ENCODE measurements at regions of chr10 and their contacts with region 1.

Region 1: GRCh38 chr10:31707093-31708039 is 221.3 kb downstream of the ARHGAP12 start:
- DNase-seq: peak; percentile 69 to 78
- ATAC-seq: peak; percentile 17 to 49 (median 30)
- H3K4me3 ChIP-seq: peak overlapping the region; percentile 28
- H3K27ac ChIP-seq: peak overlapping the region; percentile 96
- H3K4me1 ChIP-seq: peaks cover 36% of the 10 kb centered on the region
- H3K27me3 ChIP-seq: no peaks in the 10 kb centered on the region
- CTCF ChIP-seq: no peak

Region 2: DNA sequence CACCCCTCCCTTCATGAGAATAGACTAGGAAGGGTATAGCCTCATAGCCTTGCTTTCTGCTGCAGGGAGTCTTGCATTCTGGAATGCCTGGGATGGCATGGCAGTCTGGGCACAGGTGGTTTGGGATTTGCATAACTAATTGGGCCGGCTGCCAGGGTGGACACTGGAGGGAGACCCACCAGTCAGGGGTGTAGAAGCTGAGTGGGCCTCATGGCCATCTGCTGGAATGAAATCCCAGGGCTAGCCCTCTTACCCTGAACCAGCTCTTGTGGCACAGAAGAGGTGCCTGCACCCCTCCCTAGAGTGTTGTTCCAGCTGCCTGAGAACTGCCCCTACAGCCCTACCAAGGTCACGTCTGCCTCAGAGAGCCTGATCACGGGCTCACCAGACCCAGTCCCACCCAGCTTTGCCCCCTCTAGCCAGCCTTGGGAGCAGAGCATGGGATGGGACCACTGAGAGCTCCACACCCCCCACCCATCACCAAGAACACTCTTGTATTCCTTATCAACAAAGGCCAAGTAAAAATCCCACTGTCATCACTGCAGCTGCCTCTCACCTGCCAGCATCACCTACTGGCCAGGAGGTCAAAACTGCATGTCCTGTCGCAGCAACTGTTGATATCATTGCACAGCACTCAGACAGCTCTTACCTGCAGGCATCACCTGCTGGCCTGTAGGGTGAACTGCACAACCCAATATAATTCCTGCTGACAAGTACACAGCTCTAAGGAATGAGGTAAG is 239.4 kb before region 1 on chr10:
- intact Hi-C with region 1: no loop called
- DNase-seq: peak; percentile 13 to 34
- ATAC-seq: peak; percentile 60 to 83 (median 73)
- H3K4me3 ChIP-seq: no peak overlapping the region
- H3K27ac ChIP-seq: no peak overlapping the region
- H3K4me1 ChIP-seq: no peaks in the 10 kb centered on the region
- H3K27me3 ChIP-seq: no peaks in the 10 kb centered on the region
- CTCF ChIP-seq: peak; percentile 43

Region 3: DNA sequence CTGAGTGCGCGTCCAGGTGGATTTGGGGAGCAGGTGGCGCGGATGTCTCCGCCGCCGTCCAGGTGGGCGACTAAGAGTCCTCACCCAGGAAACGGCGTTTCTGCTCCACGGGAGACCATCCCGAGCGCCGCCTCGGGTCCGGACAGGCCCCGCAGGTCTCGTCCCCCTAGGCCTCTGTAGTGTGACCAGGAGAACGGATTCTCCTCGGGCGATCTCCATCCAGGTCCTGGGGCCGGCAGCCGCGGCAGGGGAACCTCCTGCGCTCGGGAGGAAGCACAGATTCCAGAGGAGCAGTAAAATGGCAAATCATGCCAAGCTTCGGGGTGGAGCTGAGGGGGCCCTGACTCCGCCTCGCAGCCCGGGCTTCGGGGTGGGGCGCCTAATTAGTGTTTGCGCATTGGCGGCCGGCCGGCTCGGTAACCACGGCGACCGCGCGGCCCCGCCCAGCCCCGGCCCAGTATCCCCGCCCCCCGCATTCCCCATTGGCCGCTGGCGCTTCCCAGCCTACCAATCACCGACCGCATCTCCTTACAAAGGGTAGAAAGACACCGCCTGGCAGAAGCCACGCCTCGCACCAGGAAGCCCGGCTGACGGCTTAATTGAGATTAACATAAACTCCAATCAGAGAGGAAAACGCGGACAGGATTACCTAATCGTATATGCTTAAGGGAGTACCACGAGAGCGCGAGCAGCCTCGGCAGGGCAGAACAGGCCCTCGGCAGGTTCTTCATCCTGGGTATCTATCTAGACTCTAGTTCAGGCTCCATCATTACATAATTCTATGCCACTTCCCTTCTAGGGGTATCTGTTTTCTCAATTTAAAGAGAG is 52.6 kb after region 1 on chr10:
- intact Hi-C with region 1: loop called (anchors 5 kb)
- DNase-seq: peak; percentile 94 to 96
- ATAC-seq: peak; percentile 90 to 93 (median 92)
- H3K4me3 ChIP-seq: peak overlapping the region; percentile 92
- H3K27ac ChIP-seq: peak overlapping the region; percentile 98
- H3K4me1 ChIP-seq: peaks cover 30% of the 10 kb centered on the region
- H3K27me3 ChIP-seq: no peaks in the 10 kb centered on the region
- CTCF ChIP-seq: no peak

Region 4: DNA sequence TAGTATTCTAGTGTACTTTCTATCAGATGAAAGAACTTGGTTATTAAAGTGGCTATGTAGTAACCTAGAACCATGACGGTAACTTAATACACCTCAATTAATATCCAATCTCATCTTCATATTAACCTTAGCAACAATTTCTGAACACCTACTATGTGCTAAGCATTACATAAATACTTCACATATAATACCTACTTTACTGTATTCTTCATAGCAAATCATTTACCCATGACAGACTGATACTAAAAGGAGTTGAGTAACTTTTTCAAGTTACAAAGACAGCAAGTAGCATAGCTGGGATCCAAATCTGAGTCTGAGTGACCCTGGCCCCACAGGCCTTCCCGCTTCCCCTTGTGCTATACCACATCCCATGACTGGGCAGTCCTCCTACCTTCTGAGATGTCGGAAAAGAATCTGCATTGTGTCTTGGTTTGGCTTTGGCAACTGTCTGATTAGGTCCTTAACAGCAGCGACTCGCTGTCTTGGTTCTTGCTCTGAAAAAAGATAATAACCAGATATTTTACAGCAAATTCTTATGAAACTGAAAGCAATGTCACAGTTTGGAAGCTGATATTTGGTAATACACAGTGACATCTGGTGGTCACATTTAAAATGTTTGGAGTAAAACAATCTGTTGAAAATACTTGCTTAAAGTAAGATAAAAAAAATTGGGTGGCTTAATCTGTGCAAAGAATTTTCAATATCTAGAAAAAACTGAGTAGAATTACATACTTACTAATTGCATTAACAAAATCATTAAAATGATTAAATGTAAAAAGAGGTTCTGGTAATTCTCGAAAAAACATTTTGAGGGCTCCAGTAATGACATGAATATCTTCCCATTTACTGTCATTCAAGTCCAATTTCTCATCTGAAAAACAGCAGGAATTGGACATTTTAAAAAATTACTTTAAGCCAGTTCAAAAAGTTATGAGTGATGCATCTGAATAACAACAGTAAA is 101.2 kb after region 1 on chr10:
- intact Hi-C with region 1: loop called (anchors 1 to 2 kb)
- DNase-seq: peak; percentile 23 to 61
- ATAC-seq: peak; percentile 86 to 93 (median 92)
- H3K4me3 ChIP-seq: peak overlapping the region; percentile 62
- H3K27ac ChIP-seq: peak overlapping the region; percentile 76
- H3K4me1 ChIP-seq: no peaks in the 10 kb centered on the region
- H3K27me3 ChIP-seq: no peaks in the 10 kb centered on the region
- CTCF ChIP-seq: peak; percentile 70

Region 5: DNA sequence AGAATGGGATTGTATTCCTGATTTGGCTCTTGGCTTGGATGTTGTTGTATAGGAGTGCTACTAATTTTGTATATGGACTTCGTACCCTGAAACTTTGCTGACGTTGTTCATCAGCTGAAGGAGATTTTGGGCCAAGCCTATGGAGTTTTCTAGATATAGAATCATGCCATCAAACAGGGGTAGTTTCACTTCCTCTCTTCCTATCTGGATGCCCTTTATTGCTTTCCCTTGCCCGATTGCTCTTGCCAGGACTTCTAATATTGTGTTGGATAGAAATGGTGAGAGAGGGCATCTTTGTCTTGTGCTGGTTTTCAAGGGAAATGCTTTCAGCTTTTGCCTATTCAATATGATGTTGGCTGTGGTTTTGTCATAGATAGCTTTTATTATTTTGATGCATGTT is 830.9 kb after region 1 on chr10:
- intact Hi-C with region 1: no loop called
- DNase-seq: no peak
- ATAC-seq: no peak
- H3K4me3 ChIP-seq: no peak overlapping the region
- H3K27ac ChIP-seq: no peak overlapping the region
- H3K4me1 ChIP-seq: no peaks in the 10 kb centered on the region
- H3K27me3 ChIP-seq: no peaks in the 10 kb centered on the region
- CTCF ChIP-seq: no peak

Measured in psoas muscle (tissue), 8 donors.